CD4-positive, alpha-beta T cell (primary cell): ENCODE measurements at regions of chr11 and their contacts with region 1.

Region 1: GRCh38 chr11:66001942-66002647 is at the starts of genes BANF1 and EIF1AD:
- DNase-seq: peak; percentile 84 to 98 (median 89)
- ATAC-seq: peak; percentile 77
- H3K4me3 ChIP-seq: peak within 1 kb of the TSS; percentile 75
- H3K4me3 Mint-ChIP-seq: peak within 1 kb of the TSS; percentile 94
- H3K27ac ChIP-seq: peak within 1 kb of the TSS; percentile 86 to 96
- H3K27ac Mint-ChIP-seq: peak within 1 kb of the TSS; percentile 97
- H3K4me1 ChIP-seq: peaks cover 39% of the 10 kb centered on the region
- H3K4me1 Mint-ChIP-seq: peaks cover 54% of the 10 kb centered on the region
- H3K27me3 ChIP-seq: no peaks in the 10 kb centered on the region
- H3K27me3 Mint-ChIP-seq: no peaks in the 10 kb centered on the region
- CTCF ChIP-seq: no peak
- total RNA-seq, gene BANF1: 21.3 to 22.3 TPM
- total RNA-seq, gene EIF1AD: 88.2 to 94.1 TPM

Region 2: DNA sequence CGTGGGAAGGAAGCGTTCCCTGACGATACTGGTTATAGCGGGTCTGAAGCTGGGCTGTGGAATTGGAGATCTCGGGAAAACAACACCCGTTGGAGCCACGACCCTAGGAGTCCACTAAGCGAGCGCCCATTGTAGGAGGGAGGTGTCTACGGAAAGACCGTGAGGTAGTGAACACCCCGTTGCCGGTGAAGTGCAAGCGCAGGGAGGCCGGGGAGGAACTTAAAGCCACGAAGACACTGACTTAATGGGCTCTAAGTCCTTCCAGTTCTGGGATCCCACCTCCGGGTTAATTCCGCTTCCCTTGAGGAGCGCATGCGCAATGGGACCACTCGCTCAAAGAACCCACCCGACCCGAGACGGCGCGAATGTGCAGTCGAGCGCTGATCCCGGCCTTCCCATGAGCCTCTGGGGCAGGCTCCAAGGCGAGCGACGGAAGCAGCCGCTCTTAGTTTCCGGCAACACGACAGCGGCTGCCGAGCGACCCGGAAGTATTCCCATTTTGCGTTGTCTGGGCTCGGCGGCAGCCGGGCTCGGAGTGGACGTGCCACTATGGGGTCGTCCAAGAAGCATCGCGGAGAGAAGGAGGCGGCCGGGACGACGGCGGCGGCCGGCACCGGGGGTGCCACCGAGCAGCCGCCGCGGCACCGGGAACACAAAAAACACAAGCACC is 40.7 kb before region 1 on chr11 and contains the start of gene SART1:
- CTCF ChIA-PET with region 1: no interaction called
- POLR2A ChIA-PET with region 1: interaction called, 6 read pairs
- intact Hi-C with region 1: loop called (anchors 1 kb)
- DNase-seq: peak; percentile 89 to 99 (median 94)
- ATAC-seq: peak; percentile 90
- H3K4me3 ChIP-seq: peak within 1 kb of the TSS; percentile 92
- H3K4me3 Mint-ChIP-seq: peak within 1 kb of the TSS; percentile 99
- H3K27ac ChIP-seq: peak within 1 kb of the TSS; percentile 93 to 95
- H3K27ac Mint-ChIP-seq: peak within 1 kb of the TSS; percentile 96
- H3K4me1 ChIP-seq: peaks cover 54% of the 10 kb centered on the region
- H3K4me1 Mint-ChIP-seq: peaks cover 55% of the 10 kb centered on the region
- H3K27me3 ChIP-seq: no peaks in the 10 kb centered on the region
- H3K27me3 Mint-ChIP-seq: no peaks in the 10 kb centered on the region
- CTCF ChIP-seq: no peak
- total RNA-seq, gene SART1: 78.6 to 80.2 TPM

Region 3: DNA sequence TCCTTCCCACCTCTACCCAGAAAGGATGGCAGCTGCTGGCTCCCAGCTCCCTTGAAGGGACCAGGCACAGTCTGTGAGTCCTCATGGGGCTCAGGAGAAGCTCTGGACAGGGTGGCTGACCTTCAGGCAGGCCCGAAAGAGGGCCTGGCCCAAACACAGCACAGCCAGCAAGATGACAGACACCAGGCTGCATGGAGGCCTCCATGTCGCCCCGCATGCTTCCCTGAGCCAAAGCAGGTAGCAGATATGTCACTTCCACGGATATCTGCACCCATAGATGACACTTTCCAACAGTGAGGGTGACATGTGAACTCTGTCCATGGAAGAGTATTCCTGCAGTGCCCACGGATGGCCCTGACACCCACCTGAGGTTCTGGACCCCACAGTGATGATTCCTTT is 18.5 kb before region 1 on chr11:
- CTCF ChIA-PET with region 1: no interaction called
- POLR2A ChIA-PET with region 1: no interaction called
- intact Hi-C with region 1: no loop called
- DNase-seq: no peak
- ATAC-seq: no peak
- H3K4me3 ChIP-seq: no peak overlapping the region
- H3K4me3 Mint-ChIP-seq: no peak overlapping the region
- H3K27ac ChIP-seq: no peak overlapping the region
- H3K27ac Mint-ChIP-seq: no peak overlapping the region
- H3K4me1 ChIP-seq: no peaks in the 10 kb centered on the region
- H3K4me1 Mint-ChIP-seq: no peaks in the 10 kb centered on the region
- H3K27me3 ChIP-seq: no peaks in the 10 kb centered on the region
- H3K27me3 Mint-ChIP-seq: no peaks in the 10 kb centered on the region
- CTCF ChIP-seq: no peak

Region 4: GRCh38 chr11:66022401-66023185 is 20.5 kb after region 1 on chr11:
- CTCF ChIA-PET with region 1: interaction called, 10 read pairs
- POLR2A ChIA-PET with region 1: interaction called, 3 read pairs
- intact Hi-C with region 1: no loop called
- DNase-seq: peak; percentile 50 to 86 (median 70)
- ATAC-seq: peak; percentile 98
- H3K4me3 ChIP-seq: no peak overlapping the region
- H3K4me3 Mint-ChIP-seq: no peak overlapping the region
- H3K27ac ChIP-seq: no peak overlapping the region
- H3K27ac Mint-ChIP-seq: no peak overlapping the region
- H3K4me1 ChIP-seq: peaks cover 20% of the 10 kb centered on the region
- H3K4me1 Mint-ChIP-seq: peaks cover 5% of the 10 kb centered on the region
- H3K27me3 ChIP-seq: no peaks in the 10 kb centered on the region
- H3K27me3 Mint-ChIP-seq: peaks cover 7% of the 10 kb centered on the region
- CTCF ChIP-seq: peak; percentile 90

Region 5: DNA sequence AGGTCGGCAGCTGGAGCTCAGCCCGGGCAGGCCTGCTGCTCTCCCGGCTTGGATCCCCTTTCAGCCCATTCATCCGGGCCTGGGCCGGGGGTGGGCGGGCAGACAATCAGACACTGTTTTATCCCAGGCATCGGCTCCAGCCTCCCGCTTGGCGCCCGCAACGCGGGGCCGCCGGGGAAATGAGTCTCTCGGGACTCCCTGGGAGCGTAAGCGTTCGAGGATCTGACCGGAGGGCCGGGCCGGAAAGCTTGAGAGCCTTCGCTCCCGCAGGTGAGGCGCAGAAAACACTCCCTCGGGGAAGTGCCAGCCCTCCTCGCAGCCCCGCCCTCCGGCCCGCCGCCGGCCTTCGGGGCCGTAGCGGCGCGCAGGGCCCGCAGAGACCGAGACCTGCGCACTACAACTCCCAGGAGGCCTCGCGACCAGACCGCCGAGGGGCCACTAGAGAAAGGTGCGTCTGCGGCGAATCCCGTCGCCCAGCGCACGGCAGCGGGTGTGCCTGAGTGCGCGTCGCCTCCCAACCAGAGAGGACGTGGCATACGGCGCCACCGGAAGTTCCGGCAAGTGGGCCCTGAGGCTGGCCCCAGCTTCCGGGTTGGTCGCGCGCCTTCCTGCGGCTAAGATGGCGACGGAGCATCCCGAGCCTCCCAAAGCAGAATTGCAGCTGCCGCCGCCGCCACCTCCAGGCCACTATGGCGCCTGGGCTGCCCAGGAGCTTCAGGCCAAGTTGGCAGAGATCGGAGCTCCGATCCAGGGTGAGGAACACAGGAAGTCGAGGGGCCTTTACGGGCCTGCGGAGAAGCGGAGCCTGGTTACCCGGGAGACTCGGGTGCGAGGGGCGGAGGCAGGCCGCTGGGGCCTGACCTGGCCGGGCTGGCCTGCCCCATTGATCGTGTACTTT is 49.9 kb after region 1 on chr11 and contains the start of gene SF3B2:
- CTCF ChIA-PET with region 1: interaction called, 4 read pairs
- POLR2A ChIA-PET with region 1: interaction called, 9 read pairs
- intact Hi-C with region 1: loop called in 1 of 2 experiments (anchors 1 kb)
- DNase-seq: peak; percentile 88 to 99 (median 94)
- ATAC-seq: peak; percentile 95
- H3K4me3 ChIP-seq: peak within 1 kb of the TSS; percentile 100
- H3K4me3 Mint-ChIP-seq: peak within 1 kb of the TSS; percentile 100
- H3K27ac ChIP-seq: peak within 1 kb of the TSS; percentile 66 to 90
- H3K27ac Mint-ChIP-seq: peak within 1 kb of the TSS; percentile 97
- H3K4me1 ChIP-seq: peaks cover 43% of the 10 kb centered on the region
- H3K4me1 Mint-ChIP-seq: peaks cover 37% of the 10 kb centered on the region
- H3K27me3 ChIP-seq: no peaks in the 10 kb centered on the region
- H3K27me3 Mint-ChIP-seq: peaks cover 5% of the 10 kb centered on the region
- CTCF ChIP-seq: no peak
- total RNA-seq, gene SF3B2: 182 to 196 TPM